ENCODE measurements at regions of chr7 and their contacts with region 1.

Region 1: GRCh38 chr7:87219545-87220025 is at the start of gene TMEM243:
- DNase-seq: peak; percentile 85
- ATAC-seq: peak; percentile 60
- H3K4me3 Mint-ChIP-seq: peak within 1 kb of the TSS; percentile 98
- H3K27ac Mint-ChIP-seq: peak within 1 kb of the TSS; percentile 99
- H3K4me1 Mint-ChIP-seq: peaks cover 51% of the 10 kb centered on the region
- H3K27me3 Mint-ChIP-seq: no peaks in the 10 kb centered on the region
- CTCF ChIP-seq: no peak
- total RNA-seq, gene TMEM243: 106 and 111 TPM in 2 replicates

Region 2: GRCh38 chr7:86876146-86876545 is 343.4 kb before region 1 on chr7:
- CTCF ChIA-PET with region 1: no interaction called
- POLR2A ChIA-PET with region 1: no interaction called
- intact Hi-C with region 1: no loop called
- DNase-seq: no peak
- ATAC-seq: no peak
- H3K4me3 Mint-ChIP-seq: no peak overlapping the region
- H3K27ac Mint-ChIP-seq: no peak overlapping the region
- H3K4me1 Mint-ChIP-seq: no peaks in the 10 kb centered on the region
- H3K27me3 Mint-ChIP-seq: no peaks in the 10 kb centered on the region
- CTCF ChIP-seq: no peak

Region 3: GRCh38 chr7:87188930-87189329 is 30.7 kb before region 1 on chr7:
- CTCF ChIA-PET with region 1: interaction called, 3 read pairs
- POLR2A ChIA-PET with region 1: interaction called, 30 read pairs
- intact Hi-C with region 1: loop called (anchors 1 kb)
- DNase-seq: no peak
- ATAC-seq: no peak
- H3K4me3 Mint-ChIP-seq: no peak overlapping the region
- H3K27ac Mint-ChIP-seq: peak overlapping the region; percentile 71
- H3K4me1 Mint-ChIP-seq: peaks cover 28% of the 10 kb centered on the region
- H3K27me3 Mint-ChIP-seq: no peaks in the 10 kb centered on the region
- CTCF ChIP-seq: no peak

Region 4: GRCh38 chr7:87206361-87206760 is 13.2 kb before region 1 on chr7:
- CTCF ChIA-PET with region 1: interaction called, 7 read pairs
- POLR2A ChIA-PET with region 1: interaction called, 143 read pairs
- intact Hi-C with region 1: loop called (anchors 1 kb)
- DNase-seq: no peak
- ATAC-seq: no peak
- H3K4me3 Mint-ChIP-seq: no peak overlapping the region
- H3K27ac Mint-ChIP-seq: peak overlapping the region; percentile 10
- H3K4me1 Mint-ChIP-seq: peaks cover 77% of the 10 kb centered on the region
- H3K27me3 Mint-ChIP-seq: no peaks in the 10 kb centered on the region
- CTCF ChIP-seq: no peak

Region 5: GRCh38 chr7:87628780-87629569 is 409.4 kb after region 1 on chr7:
- CTCF ChIA-PET with region 1: no interaction called
- POLR2A ChIA-PET with region 1: no interaction called
- intact Hi-C with region 1: loop called (anchors 2 kb)
- DNase-seq: peak; percentile 44
- ATAC-seq: peak; percentile 18
- H3K4me3 Mint-ChIP-seq: peak overlapping the region; percentile 83
- H3K27ac Mint-ChIP-seq: no peak overlapping the region
- H3K4me1 Mint-ChIP-seq: peaks cover 11% of the 10 kb centered on the region
- H3K27me3 Mint-ChIP-seq: peaks cover 8% of the 10 kb centered on the region
- CTCF ChIP-seq: no peak

Region 6: GRCh38 chr7:87672217-87672616 is 452.6 kb after region 1 on chr7:
- CTCF ChIA-PET with region 1: no interaction called
- POLR2A ChIA-PET with region 1: no interaction called
- intact Hi-C with region 1: no loop called
- DNase-seq: no peak
- ATAC-seq: no peak
- H3K4me3 Mint-ChIP-seq: no peak overlapping the region
- H3K27ac Mint-ChIP-seq: no peak overlapping the region
- H3K4me1 Mint-ChIP-seq: no peaks in the 10 kb centered on the region
- H3K27me3 Mint-ChIP-seq: peaks cover 10% of the 10 kb centered on the region
- CTCF ChIP-seq: no peak